ENCODE measurements at regions of chr6 and their contacts with region 1.

Region 1: GRCh38 chr6:29705389-29706231 is 17.6 kb upstream of the HLA-F start:
- DNase-seq: peak in 2 of 5 donors; percentile 48 to 51
- H3K4me3 ChIP-seq: no peak overlapping the region
- H3K4me3 Mint-ChIP-seq: peak overlapping the region in 4 of 8 donors; percentile 33 to 64 (median 44)
- H3K27ac ChIP-seq: no peak overlapping the region
- H3K27ac Mint-ChIP-seq: peak overlapping the region; percentile 63 to 90 (median 83)
- H3K4me1 ChIP-seq: peaks cover 54% of the 10 kb centered on the region
- H3K4me1 Mint-ChIP-seq: peaks cover 38 to 58% (median 51%) of the 10 kb centered on the region in 4 donors
- H3K27me3 ChIP-seq: no peaks in the 10 kb centered on the region
- H3K27me3 Mint-ChIP-seq: peaks cover 6 to 15% of the 10 kb centered on the region in 2 donors

Region 2: DNA sequence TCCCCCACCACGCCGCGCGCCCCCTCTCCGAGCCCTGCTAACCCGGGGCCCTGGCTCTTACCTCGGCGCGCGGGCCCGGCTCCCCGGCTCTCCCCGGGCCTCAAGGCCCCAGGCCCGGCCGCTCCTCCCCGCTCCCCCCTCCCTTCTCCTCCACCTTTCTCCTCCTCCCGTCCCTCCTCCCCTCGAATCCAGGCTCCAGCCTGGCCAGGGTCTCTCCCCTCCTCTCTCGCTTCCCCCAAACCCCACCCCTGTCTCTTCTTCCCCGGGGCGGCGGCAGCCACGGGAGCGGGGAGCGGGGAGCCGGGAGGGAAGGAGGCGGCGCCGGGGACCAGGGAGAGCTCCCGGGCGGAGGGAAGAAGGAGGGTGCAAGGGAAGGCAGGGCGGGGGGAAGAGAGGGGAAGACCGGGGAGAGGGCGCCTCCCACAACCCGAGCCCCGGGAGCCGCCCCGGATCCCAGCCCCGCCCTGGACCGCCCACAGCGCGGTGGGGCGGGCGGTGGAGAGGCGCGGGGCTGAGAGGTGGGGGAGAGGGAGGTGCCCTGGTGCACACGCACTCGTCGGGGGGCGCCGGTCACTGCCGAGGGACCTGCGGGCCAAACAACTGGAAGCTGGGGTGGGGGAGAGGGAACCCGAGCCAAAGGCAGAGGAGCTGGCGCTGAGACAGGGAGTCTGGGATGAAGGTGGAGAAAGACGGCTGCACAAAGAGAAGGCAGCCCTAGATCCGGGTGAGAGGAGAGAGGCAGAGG is 72.6 kb before region 1 on chr6 and contains the start of gene GABBR1:
- CTCF ChIA-PET with region 1: no interaction called
- POLR2A ChIA-PET with region 1: no interaction called
- intact Hi-C with region 1: no loop called
- DNase-seq: peak; percentile 61 to 80 (median 69)
- H3K4me3 ChIP-seq: peak within 1 kb of the TSS in 1 of 2 donors; percentile 59
- H3K4me3 Mint-ChIP-seq: peak within 1 kb of the TSS; percentile 87 to 95 (median 92)
- H3K27ac ChIP-seq: peak within 1 kb of the TSS; percentile 37
- H3K27ac Mint-ChIP-seq: peak within 1 kb of the TSS; percentile 82 to 97 (median 91)
- H3K4me1 ChIP-seq: peaks cover 50% of the 10 kb centered on the region
- H3K4me1 Mint-ChIP-seq: peaks cover 39 to 59% (median 47%) of the 10 kb centered on the region in 4 donors
- H3K27me3 ChIP-seq: no peaks in the 10 kb centered on the region
- H3K27me3 Mint-ChIP-seq: no peaks in the 10 kb centered on the region
- total RNA-seq, gene GABBR1: 58.1 to 58.9 TPM

Region 3: GRCh38 chr6:29676981-29677601 is 28.5 kb before region 1 on chr6:
- CTCF ChIA-PET with region 1: no interaction called
- POLR2A ChIA-PET with region 1: no interaction called
- intact Hi-C with region 1: no loop called
- DNase-seq: no peak
- H3K4me3 ChIP-seq: no peak overlapping the region
- H3K4me3 Mint-ChIP-seq: no peak overlapping the region
- H3K27ac ChIP-seq: no peak overlapping the region
- H3K27ac Mint-ChIP-seq: peak overlapping the region in 4 of 7 donors; percentile 70 to 87 (median 74)
- H3K4me1 ChIP-seq: peaks cover 6% of the 10 kb centered on the region
- H3K4me1 Mint-ChIP-seq: peaks cover 2 to 27% (median 6%) of the 10 kb centered on the region in 4 donors
- H3K27me3 ChIP-seq: no peaks in the 10 kb centered on the region
- H3K27me3 Mint-ChIP-seq: peaks cover 2 to 8% of the 10 kb centered on the region in 2 donors

Region 4: GRCh38 chr6:29723262-29723665 is 17.7 kb after region 1 on chr6 and contains the start of gene HLA-F:
- CTCF ChIA-PET with region 1: interaction called, 16 read pairs
- POLR2A ChIA-PET with region 1: interaction called, 158 read pairs
- intact Hi-C with region 1: loop called (anchors 2 kb)
- DNase-seq: peak; percentile 88 to 91 (median 90)
- H3K4me3 ChIP-seq: peak within 1 kb of the TSS; percentile 95
- H3K4me3 Mint-ChIP-seq: peak within 1 kb of the TSS; percentile 94 to 98 (median 96)
- H3K27ac ChIP-seq: peak within 1 kb of the TSS; percentile 100
- H3K27ac Mint-ChIP-seq: peak within 1 kb of the TSS; percentile 96 to 99 (median 98)
- H3K4me1 ChIP-seq: peaks cover 59% of the 10 kb centered on the region
- H3K4me1 Mint-ChIP-seq: peaks cover 33 to 76% (median 43%) of the 10 kb centered on the region in 4 donors
- H3K27me3 ChIP-seq: no peaks in the 10 kb centered on the region
- H3K27me3 Mint-ChIP-seq: no peaks in the 10 kb centered on the region
- total RNA-seq, gene HLA-F: 573 to 585 TPM

Region 5: DNA sequence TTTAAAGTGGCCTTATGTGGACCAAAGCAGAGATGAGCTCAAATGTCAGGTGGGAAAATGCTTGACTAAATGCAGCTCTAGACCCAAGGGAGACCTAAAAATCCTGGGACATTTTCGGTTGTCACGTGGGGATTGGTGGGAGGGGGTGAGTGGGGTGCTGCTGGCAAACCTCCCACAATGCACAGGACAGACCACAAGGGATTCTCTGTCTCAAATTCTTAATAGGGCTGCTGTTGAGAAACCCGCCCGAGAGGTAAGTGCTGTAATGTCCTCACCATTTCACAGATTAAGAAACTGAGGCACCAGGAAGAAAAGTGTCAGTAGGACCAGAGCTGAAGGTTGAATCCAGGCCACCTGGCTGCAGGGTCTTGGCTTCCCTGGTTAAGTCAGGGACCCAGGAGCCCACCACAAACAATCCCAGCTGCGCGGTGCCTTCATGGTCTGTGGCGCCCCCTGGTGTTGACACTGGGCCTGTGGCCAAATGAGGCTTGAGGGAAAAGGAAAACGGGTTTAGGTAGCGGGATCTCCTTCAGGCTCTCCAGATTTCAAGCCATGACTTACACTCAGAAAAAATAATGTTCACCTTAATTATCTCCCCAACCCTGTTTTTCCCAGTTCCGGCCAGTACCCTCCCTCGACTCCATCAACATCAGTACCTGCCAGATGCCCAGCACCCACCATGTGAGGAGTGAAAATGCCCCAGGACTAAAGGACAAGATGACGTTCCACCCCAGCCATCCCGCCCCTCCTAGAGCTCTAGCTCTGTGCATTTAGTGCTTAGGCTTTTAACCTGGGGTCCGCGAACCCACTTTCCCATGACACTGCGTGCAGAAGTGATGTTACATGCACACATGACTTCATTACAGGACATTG is 129.2 kb after region 1 on chr6:
- CTCF ChIA-PET with region 1: interaction called, 28 read pairs
- POLR2A ChIA-PET with region 1: interaction called, 7 read pairs
- intact Hi-C with region 1: loop called (anchors 1 kb)
- DNase-seq: peak in 4 of 5 donors; percentile 41 to 50 (median 44)
- H3K4me3 ChIP-seq: no peak overlapping the region
- H3K4me3 Mint-ChIP-seq: no peak overlapping the region
- H3K27ac ChIP-seq: no peak overlapping the region
- H3K27ac Mint-ChIP-seq: peak overlapping the region in 1 of 7 donors; percentile 19
- H3K4me1 ChIP-seq: no peaks in the 10 kb centered on the region
- H3K4me1 Mint-ChIP-seq: peaks cover 0 to 5% (median under 1%) of the 10 kb centered on the region in 4 donors
- H3K27me3 ChIP-seq: peaks cover 15% of the 10 kb centered on the region
- H3K27me3 Mint-ChIP-seq: peaks cover 35 to 57% of the 10 kb centered on the region in 2 donors